Activated CD8-positive, alpha-beta T cell treated with anti-CD3 and anti-CD28 coated beads, Interleukin-2, amount 10 ng/mL, durations not matched to agents 7 days and 5 days (primary cell): ENCODE measurements at regions of chr6 and their contacts with region 1.

Region 1: DNA sequence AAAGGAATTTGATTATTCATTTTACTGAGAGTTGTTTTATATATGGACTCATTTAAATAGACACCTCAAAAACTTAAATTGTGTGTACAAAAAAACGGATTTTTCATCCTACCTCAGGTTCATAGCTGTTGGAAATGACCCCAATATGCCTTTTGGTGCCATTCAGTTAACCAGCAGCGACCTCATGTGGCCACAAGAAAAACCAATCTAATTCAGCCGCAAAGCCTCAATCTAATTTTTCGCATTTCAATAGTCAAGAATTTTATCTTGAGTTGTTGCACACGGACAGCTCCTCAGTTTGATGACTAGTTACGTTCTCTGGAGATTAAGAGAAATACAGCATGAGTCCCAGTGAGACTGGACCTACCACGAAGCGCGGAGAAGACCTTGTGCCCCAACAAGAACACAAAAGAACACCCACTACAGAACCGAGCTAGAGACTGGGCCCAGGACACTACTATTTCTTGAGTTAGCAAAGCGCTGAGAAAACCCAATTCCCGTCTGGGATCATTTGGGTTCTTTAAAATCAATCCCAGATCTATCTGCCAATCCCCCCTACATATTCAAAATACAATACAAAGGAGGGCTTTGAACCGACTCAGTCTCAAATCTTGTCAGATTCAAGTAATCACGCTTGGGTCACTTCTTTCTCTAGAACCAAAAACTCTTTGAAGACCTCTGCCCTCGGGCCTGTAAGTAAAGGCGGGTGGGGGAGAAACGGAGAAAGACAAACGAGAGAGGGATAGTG is 1.1 kb downstream of the TCP11 start:
- DNase-seq: peak; percentile 67
- ATAC-seq: peak; percentile 45
- H3K4me3 Mint-ChIP-seq: no peak overlapping the region
- H3K27ac Mint-ChIP-seq: no peak overlapping the region
- H3K4me1 Mint-ChIP-seq: peaks cover 18% of the 10 kb centered on the region
- H3K27me3 Mint-ChIP-seq: peaks cover 26% of the 10 kb centered on the region

Region 2: DNA sequence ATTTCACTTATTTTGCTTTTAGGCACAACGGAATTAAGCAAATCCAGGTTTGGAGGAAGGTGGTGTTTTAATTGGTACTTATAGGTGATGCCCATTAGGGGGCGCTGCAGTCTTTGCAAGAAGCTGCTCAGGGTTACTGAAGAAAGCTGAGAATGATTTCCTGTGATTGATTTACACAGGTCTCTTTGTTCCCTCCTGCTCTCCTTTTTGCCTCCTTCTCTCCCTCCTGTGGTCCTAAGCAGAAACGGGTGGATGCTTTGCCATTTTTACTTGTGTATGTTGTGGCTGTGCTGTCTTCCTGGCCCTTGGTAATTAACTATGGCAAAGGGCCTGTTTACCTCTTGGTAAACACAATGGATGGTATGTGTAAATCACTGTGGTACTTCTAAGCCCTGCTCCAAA is 153.2 kb before region 1 on chr6:
- CTCF ChIA-PET with region 1: interaction called, 101 read pairs
- POLR2A ChIA-PET with region 1: no interaction called
- DNase-seq: peak; percentile 77
- ATAC-seq: peak; percentile 55
- H3K4me3 Mint-ChIP-seq: no peak overlapping the region
- H3K27ac Mint-ChIP-seq: no peak overlapping the region
- H3K4me1 Mint-ChIP-seq: no peaks in the 10 kb centered on the region
- H3K27me3 Mint-ChIP-seq: no peaks in the 10 kb centered on the region

Region 3: DNA sequence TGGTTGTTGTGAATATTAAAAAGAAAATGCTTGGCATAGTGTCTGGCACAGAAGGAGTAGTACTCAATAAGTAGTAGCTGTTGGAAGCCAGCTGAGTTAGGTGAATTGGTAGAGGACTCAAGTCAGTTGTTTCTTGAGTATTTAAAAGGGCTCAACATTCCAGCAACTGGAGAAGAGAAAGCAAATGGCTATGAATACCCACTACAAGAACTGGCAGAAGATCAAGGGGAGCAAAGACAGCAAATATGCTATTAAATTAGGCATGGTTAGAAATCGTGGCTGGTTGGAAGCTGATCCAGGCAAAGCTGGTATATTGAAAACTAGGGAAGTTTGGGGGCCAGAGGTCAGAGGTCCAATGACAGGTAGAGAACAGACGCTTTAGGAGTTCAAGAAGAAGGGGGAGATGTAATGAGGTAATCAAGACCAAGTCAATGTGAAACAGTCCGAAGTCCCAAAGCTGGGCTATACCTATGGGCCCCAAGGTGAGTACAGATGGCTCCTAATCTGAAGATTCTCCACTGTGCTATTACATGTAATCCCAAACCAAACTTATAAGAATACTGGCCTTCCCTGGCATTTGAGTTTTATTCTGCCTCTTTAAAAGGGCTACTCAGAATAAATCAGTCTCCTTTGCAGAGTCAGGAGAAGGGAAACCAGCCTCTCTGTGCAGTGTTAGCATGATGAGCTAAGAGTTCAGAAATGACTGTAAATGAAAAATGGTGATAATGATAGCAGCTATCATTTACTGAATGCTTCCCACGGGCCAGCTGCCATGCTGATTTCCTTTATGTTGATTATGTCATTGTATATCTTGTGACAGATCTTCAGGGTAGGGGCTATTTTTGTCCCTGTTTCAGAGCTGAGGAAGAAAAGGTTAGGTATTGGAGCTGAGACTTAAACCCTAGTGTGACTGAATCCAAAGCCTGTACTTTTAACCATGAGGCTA is 128.7 kb before region 1 on chr6:
- CTCF ChIA-PET with region 1: interaction called, 12 read pairs
- POLR2A ChIA-PET with region 1: no interaction called
- DNase-seq: no peak
- ATAC-seq: no peak
- H3K4me3 Mint-ChIP-seq: no peak overlapping the region
- H3K27ac Mint-ChIP-seq: no peak overlapping the region
- H3K4me1 Mint-ChIP-seq: peaks cover 4% of the 10 kb centered on the region
- H3K27me3 Mint-ChIP-seq: no peaks in the 10 kb centered on the region

Region 4: DNA sequence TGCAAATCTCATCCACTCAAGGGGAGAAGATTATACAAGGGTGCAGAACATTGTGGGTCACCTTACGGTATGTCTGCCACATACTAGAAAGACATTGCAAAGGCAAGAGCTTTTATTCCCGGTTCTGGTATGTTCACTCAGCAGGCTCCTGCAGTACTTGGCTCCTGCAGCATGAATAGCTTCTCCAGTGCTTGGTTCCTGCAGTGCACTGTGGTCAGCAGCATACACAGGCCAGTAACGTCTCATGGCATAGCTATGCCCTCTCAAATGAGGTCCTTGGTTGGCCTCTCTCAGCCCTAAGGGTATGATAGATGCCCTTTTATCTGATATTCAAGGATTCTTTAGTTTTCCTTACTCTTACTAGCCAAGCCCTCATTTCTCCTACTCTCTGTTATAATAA is 11.6 kb before region 1 on chr6:
- CTCF ChIA-PET with region 1: interaction called, 17 read pairs
- POLR2A ChIA-PET with region 1: no interaction called
- DNase-seq: no peak
- ATAC-seq: no peak
- H3K4me3 Mint-ChIP-seq: no peak overlapping the region
- H3K27ac Mint-ChIP-seq: no peak overlapping the region
- H3K4me1 Mint-ChIP-seq: no peaks in the 10 kb centered on the region
- H3K27me3 Mint-ChIP-seq: peaks cover 35% of the 10 kb centered on the region